Body of pancreas (tissue), 4 donors: ENCODE measurements at regions of chr13 and their contacts with region 1.

Region 1: GRCh38 chr13:91133941-91134802 is 213.3 kb upstream of the MIR17HG start:
- DNase-seq: peak; percentile 51 to 62 (median 59)
- ATAC-seq: peak; percentile 78
- H3K4me3 ChIP-seq: no peak overlapping the region
- H3K27ac ChIP-seq: no peak overlapping the region
- H3K4me1 ChIP-seq: no peaks in the 10 kb centered on the region
- H3K27me3 ChIP-seq: no peaks in the 10 kb centered on the region
- CTCF ChIP-seq: peak; percentile 45 to 81 (median 77)
- POLR2A ChIP-seq: no peak

Region 2: DNA sequence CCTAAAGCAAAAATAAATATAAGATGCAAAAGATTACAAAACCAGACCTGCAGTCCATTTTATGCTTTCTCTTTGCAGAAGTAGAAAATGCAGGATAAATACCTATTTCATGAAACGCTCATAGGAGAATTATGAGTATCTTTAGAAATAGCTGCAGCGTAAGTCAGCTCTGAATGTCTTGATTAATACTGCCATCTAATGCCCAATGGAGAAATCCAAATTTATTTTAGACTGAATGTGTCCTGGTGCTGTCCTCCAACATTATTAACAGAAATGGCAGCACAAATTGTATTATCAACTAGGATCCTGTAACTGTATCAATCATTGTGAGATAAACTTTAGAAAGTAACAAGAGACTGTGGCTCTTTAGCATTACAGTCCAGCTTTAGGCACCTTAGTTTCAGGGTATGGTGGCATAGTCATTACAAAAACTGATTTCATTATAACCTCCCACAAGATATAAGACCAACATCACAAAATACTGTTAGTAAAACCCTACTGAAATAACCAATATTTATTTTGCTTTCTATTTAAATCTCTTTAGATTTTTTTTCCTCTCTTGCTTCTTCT is 51.2 kb after region 1 on chr13:
- intact Hi-C with region 1: loop called (anchors 10 kb)
- DNase-seq: no peak
- ATAC-seq: no peak
- H3K4me3 ChIP-seq: no peak overlapping the region
- H3K27ac ChIP-seq: no peak overlapping the region
- H3K4me1 ChIP-seq: no peaks in the 10 kb centered on the region
- H3K27me3 ChIP-seq: no peaks in the 10 kb centered on the region
- CTCF ChIP-seq: peak in 5 of 7 experiments; percentile 17 to 48 (median 35)
- POLR2A ChIP-seq: no peak